ENCODE measurements at regions of chr20 and their contacts with region 1.

Region 1: GRCh38 chr20:23857962-23858565 is 21.5 kb downstream of the CST5 start:
- DNase-seq: no peak
- H3K4me3 ChIP-seq: no peak overlapping the region
- H3K27ac ChIP-seq: no peak overlapping the region
- H3K4me1 ChIP-seq: no peaks in the 10 kb centered on the region
- H3K27me3 ChIP-seq: no peaks in the 10 kb centered on the region
- CTCF ChIP-seq: no peak

Region 2: GRCh38 chr20:23832775-23833508 is 25.1 kb before region 1 on chr20:
- intact Hi-C with region 1: loop called (anchors 2 kb)
- DNase-seq: no peak
- H3K4me3 ChIP-seq: no peak overlapping the region
- H3K27ac ChIP-seq: no peak overlapping the region
- H3K4me1 ChIP-seq: no peaks in the 10 kb centered on the region
- H3K27me3 ChIP-seq: no peaks in the 10 kb centered on the region
- CTCF ChIP-seq: no peak